ENCODE measurements at regions of chr6 and their contacts with region 1.

Region 1: DNA sequence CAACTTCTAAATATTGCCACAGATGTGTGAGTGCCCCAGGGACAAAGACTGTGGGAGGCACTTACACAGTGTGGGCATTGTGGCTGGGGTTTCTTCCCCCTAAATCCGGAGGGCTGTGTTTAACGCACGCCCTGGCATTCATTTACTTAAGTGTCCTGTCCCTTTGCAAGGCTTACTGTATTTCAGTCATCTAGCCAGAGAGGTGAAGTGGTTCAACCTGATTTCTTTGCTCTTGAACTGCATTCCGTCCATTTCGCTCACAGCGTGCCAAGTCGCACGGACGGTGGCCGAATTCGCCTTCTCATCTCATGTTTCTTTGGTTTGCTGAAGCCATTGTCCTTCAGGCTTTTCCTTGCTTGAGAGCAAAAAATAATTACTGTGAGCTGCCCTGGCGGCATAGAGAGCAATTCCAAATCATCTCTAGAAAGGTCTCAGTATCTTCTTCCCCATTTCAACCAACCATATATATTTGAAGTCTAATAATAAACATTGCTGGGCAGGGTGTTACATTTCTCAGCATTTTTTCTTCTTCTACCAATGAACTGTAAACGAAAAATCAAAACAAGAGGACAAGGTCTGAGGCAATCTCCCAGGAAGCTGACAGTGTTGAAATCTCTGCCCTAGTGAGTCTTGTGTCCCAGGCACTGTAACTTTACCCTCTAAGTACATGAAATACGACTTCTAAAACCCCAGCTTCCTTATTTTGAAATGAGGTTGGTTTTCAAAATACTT is 16.9 kb downstream of the SYTL3 start:
- DNase-seq: no peak

Region 2: GRCh38 chr6:158686311-158686710 is 19.5 kb after region 1 on chr6:
- intact Hi-C with region 1: loop called in 1 of 2 experiments (anchors 1 kb)
- DNase-seq: no peak